Naive thymus-derived CD4-positive, alpha-beta T cell (primary cell): ENCODE measurements at regions of chr2 and their contacts with region 1.

Region 1: GRCh38 chr2:218710687-218711549 is at the start of gene TTLL4:
- DNase-seq: peak; percentile 98 to 99 (median 99)
- ATAC-seq: peak; percentile 99
- H3K4me3 ChIP-seq: peak within 1 kb of the TSS; percentile 79
- H3K4me3 Mint-ChIP-seq: peak within 1 kb of the TSS; percentile 91 to 99 (median 97)
- H3K27ac ChIP-seq: peak within 1 kb of the TSS; percentile 86
- H3K27ac Mint-ChIP-seq: peak within 1 kb of the TSS; percentile 58 to 96 (median 90)
- H3K4me1 ChIP-seq: peaks cover 8% of the 10 kb centered on the region in 2 donors
- H3K4me1 Mint-ChIP-seq: peaks cover 17 to 31% (median 19%) of the 10 kb centered on the region in 7 donors
- H3K27me3 ChIP-seq: no peaks in the 10 kb centered on the region
- H3K27me3 Mint-ChIP-seq: peaks cover 0 to 7% (median 0%) of the 10 kb centered on the region in 5 donors
- total RNA-seq, gene TTLL4: 18.7 to 35.8 (median 21.2) TPM

Region 2: GRCh38 chr2:218406209-218406948 is 304.5 kb before region 1 on chr2:
- CTCF ChIA-PET with region 1: no interaction called
- POLR2A ChIA-PET with region 1: no interaction called
- intact Hi-C with region 1: loop called (anchors 1 kb)
- DNase-seq: peak; percentile 75 to 94 (median 85)
- ATAC-seq: peak; percentile 81
- H3K4me3 ChIP-seq: peak overlapping the region; percentile 56
- H3K4me3 Mint-ChIP-seq: peak overlapping the region; percentile 77 to 95 (median 88)
- H3K27ac ChIP-seq: peak overlapping the region; percentile 75
- H3K27ac Mint-ChIP-seq: peak overlapping the region; percentile 83 to 95 (median 91)
- H3K4me1 ChIP-seq: peaks cover 23 to 32% of the 10 kb centered on the region in 2 donors
- H3K4me1 Mint-ChIP-seq: peaks cover 31 to 62% (median 53%) of the 10 kb centered on the region in 7 donors
- H3K27me3 ChIP-seq: no peaks in the 10 kb centered on the region
- H3K27me3 Mint-ChIP-seq: peaks cover 0 to 3% (median 0%) of the 10 kb centered on the region in 5 donors

Region 3: DNA sequence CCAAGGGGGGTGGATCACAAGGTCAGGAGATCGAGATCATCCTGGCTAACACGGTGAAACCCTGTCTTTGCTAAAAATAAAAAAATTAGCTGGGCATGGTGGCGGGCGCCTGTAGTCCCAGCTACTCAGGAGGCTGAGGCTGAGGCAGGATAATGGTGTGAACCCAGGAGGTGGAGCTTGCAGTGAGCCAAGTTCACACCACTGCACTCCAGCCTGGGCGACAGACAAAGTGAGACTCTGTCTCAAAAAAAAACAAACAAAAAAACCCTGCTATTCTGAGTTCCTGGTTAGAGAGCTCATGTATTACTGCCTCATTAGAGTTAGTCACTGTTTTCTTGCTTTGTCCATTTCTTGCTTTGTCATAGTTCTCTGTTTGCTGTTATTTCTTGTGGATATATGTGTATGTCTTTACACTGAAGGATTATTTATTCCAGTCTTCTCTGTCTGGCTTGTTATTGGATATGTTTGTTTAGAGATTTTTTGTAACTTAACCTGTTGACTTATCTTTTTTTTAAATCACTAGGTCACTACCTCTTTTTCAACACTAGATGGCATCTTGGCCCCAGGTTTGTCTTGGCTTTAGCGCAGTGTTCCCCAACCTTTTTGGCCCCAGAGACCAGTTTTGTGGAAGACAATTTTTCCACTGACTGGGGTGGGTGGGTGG is 16.7 kb after region 1 on chr2:
- CTCF ChIA-PET with region 1: interaction called, 3 read pairs
- POLR2A ChIA-PET with region 1: no interaction called
- intact Hi-C with region 1: loop called in 1 of 2 experiments (anchors 2 kb)
- DNase-seq: no peak
- ATAC-seq: peak; percentile 41
- H3K4me3 ChIP-seq: no peak overlapping the region
- H3K4me3 Mint-ChIP-seq: no peak overlapping the region
- H3K27ac ChIP-seq: no peak overlapping the region
- H3K27ac Mint-ChIP-seq: peak overlapping the region in 1 of 9 donors; percentile 43
- H3K4me1 ChIP-seq: no peaks in the 10 kb centered on the region
- H3K4me1 Mint-ChIP-seq: peaks cover 10 to 24% (median 18%) of the 10 kb centered on the region in 7 donors
- H3K27me3 ChIP-seq: no peaks in the 10 kb centered on the region
- H3K27me3 Mint-ChIP-seq: no peaks in the 10 kb centered on the region

Region 4: DNA sequence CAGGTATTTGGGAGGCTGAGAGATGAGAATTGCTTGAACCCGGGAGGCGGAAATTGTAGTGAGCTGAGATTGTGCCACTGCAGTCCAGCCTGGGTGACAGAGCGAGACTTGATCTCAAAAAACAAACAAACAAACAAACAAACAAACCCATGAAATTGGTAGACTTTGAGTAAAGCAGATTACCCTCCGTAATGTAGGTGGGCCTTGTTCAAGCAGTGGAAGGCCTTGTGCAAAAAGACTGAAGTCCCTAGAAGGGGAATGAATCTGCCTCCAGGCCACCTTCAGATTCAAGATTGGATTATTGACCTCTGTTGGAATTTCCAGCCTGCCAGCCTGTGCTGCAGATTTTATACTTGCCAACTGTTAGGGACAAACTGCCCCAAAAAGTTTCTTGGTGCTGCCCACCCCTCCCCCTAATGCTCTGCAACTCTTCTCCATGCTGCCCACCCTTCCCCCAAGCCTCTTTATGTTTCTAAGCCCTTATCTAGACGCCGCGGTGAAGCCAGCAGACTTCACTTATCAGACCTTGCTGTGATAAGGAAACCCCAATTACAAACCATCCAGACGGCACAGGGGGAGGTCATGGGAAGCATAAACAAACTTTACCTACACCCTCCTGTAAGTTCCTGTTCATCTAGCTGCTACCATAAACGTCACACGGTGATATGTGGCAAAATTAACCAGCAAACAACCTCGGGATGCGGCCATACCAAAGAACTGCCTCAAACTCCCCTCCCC is 88.0 kb after region 1 on chr2:
- CTCF ChIA-PET with region 1: no interaction called
- POLR2A ChIA-PET with region 1: no interaction called
- intact Hi-C with region 1: no loop called
- DNase-seq: no peak
- ATAC-seq: no peak
- H3K4me3 ChIP-seq: no peak overlapping the region
- H3K4me3 Mint-ChIP-seq: no peak overlapping the region
- H3K27ac ChIP-seq: no peak overlapping the region
- H3K27ac Mint-ChIP-seq: no peak overlapping the region
- H3K4me1 ChIP-seq: peaks cover 0 to 13% of the 10 kb centered on the region in 2 donors
- H3K4me1 Mint-ChIP-seq: peaks cover 0 to 12% (median 0%) of the 10 kb centered on the region in 7 donors
- H3K27me3 ChIP-seq: no peaks in the 10 kb centered on the region
- H3K27me3 Mint-ChIP-seq: peaks cover 18 to 55% (median 22%) of the 10 kb centered on the region in 5 donors

Region 5: DNA sequence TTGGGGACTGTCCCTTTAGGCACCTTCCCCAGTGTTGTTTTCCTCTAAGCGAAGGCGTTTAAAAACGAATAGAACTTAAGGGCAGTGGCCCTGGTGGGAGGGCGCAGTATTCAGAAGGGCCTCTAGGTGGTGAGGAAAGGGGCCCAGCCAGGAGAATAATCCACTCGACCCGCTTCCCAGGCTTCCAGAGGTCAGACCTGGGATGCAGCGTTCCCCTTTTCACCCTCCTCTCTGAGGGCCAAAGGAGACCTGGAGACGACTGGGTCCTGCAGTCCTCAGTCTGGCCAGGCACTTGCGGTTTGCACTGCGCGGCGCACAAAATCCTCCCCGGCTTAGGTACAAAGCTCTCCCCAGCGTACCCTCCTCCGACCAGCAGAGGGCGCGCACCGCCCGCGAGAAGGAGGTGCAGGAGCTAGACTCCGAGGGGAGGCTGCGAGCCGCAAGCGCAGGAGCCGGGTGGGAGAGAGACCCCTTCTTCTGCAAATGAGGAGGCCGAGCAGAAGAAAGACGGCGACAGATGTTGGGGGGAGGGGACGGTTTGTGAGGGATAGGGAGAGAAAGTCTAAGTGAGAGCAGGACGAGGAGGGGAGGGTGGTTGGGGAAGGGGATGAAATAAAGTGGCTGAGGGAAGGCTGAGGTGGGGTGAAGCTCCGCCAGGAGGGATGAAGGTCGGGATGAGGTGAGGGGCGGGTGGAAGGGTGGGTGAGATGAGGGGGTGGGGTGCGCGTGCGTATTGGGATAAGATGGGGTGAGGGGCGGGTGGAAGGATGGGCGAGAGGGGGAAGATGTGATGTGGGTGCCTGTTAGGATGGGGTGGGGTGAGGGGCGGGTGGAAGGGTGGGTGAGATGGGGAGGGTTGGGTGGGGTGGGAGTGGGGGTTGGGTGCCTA is 269.2 kb after region 1 on chr2:
- CTCF ChIA-PET with region 1: no interaction called
- POLR2A ChIA-PET with region 1: no interaction called
- intact Hi-C with region 1: loop called in 1 of 2 experiments (anchors 1 kb)
- DNase-seq: peak; percentile 65 to 85 (median 81)
- ATAC-seq: peak; percentile 93
- H3K4me3 ChIP-seq: peak overlapping the region; percentile 53
- H3K4me3 Mint-ChIP-seq: peak overlapping the region; percentile 66 to 94 (median 73)
- H3K27ac ChIP-seq: no peak overlapping the region
- H3K27ac Mint-ChIP-seq: peak overlapping the region in 1 of 9 donors; percentile 58
- H3K4me1 ChIP-seq: peaks cover 13 to 23% of the 10 kb centered on the region in 2 donors
- H3K4me1 Mint-ChIP-seq: peaks cover 14 to 40% (median 20%) of the 10 kb centered on the region in 7 donors
- H3K27me3 ChIP-seq: peaks cover 17 to 35% of the 10 kb centered on the region in 2 donors
- H3K27me3 Mint-ChIP-seq: peaks cover 60 to 80% (median 70%) of the 10 kb centered on the region in 5 donors

Region 6: DNA sequence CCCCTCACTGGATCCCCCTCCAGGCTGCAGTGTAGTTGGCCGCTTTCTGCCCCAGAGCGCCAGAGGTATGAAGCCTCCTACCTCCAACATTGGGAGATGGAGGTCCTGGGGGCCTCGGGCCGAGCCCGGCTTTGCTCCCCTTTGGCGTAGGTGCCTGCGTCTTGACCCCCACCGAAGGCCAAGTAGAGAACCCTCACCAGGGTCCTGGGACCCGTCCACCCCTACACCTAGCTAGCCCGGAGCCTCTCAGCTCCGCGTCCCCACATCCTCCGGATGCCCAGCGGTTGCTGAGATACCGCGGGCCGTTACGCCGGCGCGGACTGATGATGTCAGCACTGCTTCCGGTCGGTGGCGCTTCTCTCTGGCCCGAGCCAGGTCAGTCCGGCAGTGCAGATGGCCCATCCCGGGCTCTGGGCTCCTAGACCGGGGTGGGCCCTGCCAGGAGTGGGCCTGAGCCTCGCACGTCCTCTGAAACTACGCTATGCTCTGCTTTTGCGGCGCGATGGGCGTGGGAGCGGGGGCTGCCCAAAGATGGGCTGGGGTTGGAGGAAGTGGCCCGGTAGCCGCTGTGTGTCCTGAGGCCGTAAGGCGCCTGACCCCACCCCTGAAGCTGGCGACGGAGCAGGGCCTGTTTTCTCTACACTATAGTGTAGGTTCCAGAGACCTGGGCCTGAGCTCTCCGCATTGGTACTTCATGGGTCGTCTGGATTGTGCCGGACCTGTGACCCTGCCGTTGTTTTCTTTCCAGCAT is 534.4 kb after region 1 on chr2 and contains the starts of genes GLB1L and STK16:
- CTCF ChIA-PET with region 1: no interaction called
- POLR2A ChIA-PET with region 1: no interaction called
- intact Hi-C with region 1: loop called in 1 of 2 experiments (anchors 5 kb)
- DNase-seq: peak; percentile 76 to 95 (median 85)
- ATAC-seq: peak; percentile 80
- H3K4me3 ChIP-seq: peak within 1 kb of the TSS; percentile 92
- H3K4me3 Mint-ChIP-seq: peak within 1 kb of the TSS; percentile 82 to 100 (median 93)
- H3K27ac ChIP-seq: peak within 1 kb of the TSS; percentile 89
- H3K27ac Mint-ChIP-seq: peak within 1 kb of the TSS; percentile 88 to 99 (median 97)
- H3K4me1 ChIP-seq: peaks cover 52 to 53% of the 10 kb centered on the region in 2 donors
- H3K4me1 Mint-ChIP-seq: peaks cover 26 to 73% (median 59%) of the 10 kb centered on the region in 7 donors
- H3K27me3 ChIP-seq: no peaks in the 10 kb centered on the region
- H3K27me3 Mint-ChIP-seq: peaks cover 0 to 2% (median 0%) of the 10 kb centered on the region in 5 donors
- total RNA-seq, gene GLB1L: 1.9 to 4.5 (median 2.7) TPM
- total RNA-seq, gene STK16: 17.4 to 35.0 (median 21.8) TPM